ENCODE measurements at regions of chr4 and their contacts with region 1.

Region 1: GRCh38 chr4:54658252-54659093 is 716 bp downstream of the KIT start:
- DNase-seq: peak in 5 of 9 donors; percentile 11 to 45 (median 18)
- ATAC-seq: peak; percentile 43
- H3K4me3 ChIP-seq: peak overlapping the region; percentile 33
- H3K4me3 Mint-ChIP-seq: peak overlapping the region; percentile 64 to 88 (median 80)
- H3K27ac ChIP-seq: no peak overlapping the region
- H3K27ac Mint-ChIP-seq: no peak overlapping the region
- H3K4me1 ChIP-seq: peaks cover 0 to 10% of the 10 kb centered on the region in 2 donors
- H3K4me1 Mint-ChIP-seq: peaks cover 14 to 25% (median 22%) of the 10 kb centered on the region in 7 donors
- H3K27me3 ChIP-seq: peaks cover 0 to 12% of the 10 kb centered on the region in 2 donors
- H3K27me3 Mint-ChIP-seq: peaks cover 51 to 80% (median 59%) of the 10 kb centered on the region in 5 donors

Region 2: GRCh38 chr4:54315561-54316538 is 342.6 kb before region 1 on chr4:
- CTCF ChIA-PET with region 1: no interaction called
- POLR2A ChIA-PET with region 1: no interaction called
- intact Hi-C with region 1: no loop called
- DNase-seq: no peak
- ATAC-seq: peak; percentile 26
- H3K4me3 ChIP-seq: no peak overlapping the region
- H3K4me3 Mint-ChIP-seq: peak overlapping the region in 1 of 10 donors; percentile 61
- H3K27ac ChIP-seq: no peak overlapping the region
- H3K27ac Mint-ChIP-seq: peak overlapping the region in 1 of 9 donors; percentile 82
- H3K4me1 ChIP-seq: no peaks in the 10 kb centered on the region
- H3K4me1 Mint-ChIP-seq: peaks cover 0 to 35% (median 0%) of the 10 kb centered on the region in 7 donors
- H3K27me3 ChIP-seq: no peaks in the 10 kb centered on the region
- H3K27me3 Mint-ChIP-seq: peaks cover 0 to 26% (median 13%) of the 10 kb centered on the region in 5 donors

Region 3: DNA sequence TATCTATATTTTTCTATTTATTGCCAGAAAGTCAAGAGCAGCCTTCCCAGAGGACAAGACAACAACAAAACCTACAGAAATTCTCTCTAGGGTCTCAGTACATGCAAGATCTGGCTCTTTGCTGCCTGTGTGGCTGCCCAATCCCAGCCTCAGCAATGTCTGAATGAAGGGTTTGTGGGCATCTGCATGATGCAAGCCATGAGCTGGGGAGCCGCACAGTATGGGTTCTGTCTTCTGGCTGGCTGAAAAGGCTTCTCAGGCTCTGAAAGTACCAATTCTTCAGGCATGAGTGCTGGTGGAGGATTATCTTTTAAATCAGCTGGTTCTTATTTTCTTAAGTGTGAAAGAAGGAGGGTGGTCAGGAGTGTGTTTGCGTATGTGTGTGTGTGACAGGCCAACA is 324.8 kb before region 1 on chr4:
- CTCF ChIA-PET with region 1: no interaction called
- POLR2A ChIA-PET with region 1: no interaction called
- intact Hi-C with region 1: no loop called
- DNase-seq: no peak
- ATAC-seq: no peak
- H3K4me3 ChIP-seq: no peak overlapping the region
- H3K4me3 Mint-ChIP-seq: no peak overlapping the region
- H3K27ac ChIP-seq: no peak overlapping the region
- H3K27ac Mint-ChIP-seq: no peak overlapping the region
- H3K4me1 ChIP-seq: no peaks in the 10 kb centered on the region
- H3K4me1 Mint-ChIP-seq: no peaks in the 10 kb centered on the region
- H3K27me3 ChIP-seq: no peaks in the 10 kb centered on the region
- H3K27me3 Mint-ChIP-seq: peaks cover 4 to 25% (median 11%) of the 10 kb centered on the region in 5 donors

Region 4: DNA sequence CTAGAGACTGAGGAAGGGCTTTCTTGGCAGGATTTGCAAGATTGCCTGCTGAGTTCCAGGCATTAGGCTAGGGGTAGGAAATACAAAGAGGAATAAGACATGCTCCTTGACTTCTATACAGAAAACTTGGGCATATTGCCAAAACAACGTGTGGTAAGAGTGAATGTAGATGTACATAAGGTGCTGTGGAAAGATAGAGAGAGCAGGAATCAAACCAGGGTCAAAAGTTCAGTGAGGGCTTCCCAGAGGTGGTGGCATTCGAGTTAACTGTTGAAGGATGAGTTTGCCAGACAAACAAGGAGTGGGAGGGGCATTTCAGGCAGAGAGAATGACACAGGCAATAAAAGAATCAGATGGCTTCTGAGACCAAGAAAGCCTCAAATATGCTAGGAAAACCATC is 279.0 kb after region 1 on chr4:
- CTCF ChIA-PET with region 1: no interaction called
- POLR2A ChIA-PET with region 1: no interaction called
- intact Hi-C with region 1: no loop called
- DNase-seq: peak in 3 of 9 donors; percentile 6 to 18 (median 10)
- ATAC-seq: no peak
- H3K4me3 ChIP-seq: no peak overlapping the region
- H3K4me3 Mint-ChIP-seq: no peak overlapping the region
- H3K27ac ChIP-seq: no peak overlapping the region
- H3K27ac Mint-ChIP-seq: peak overlapping the region in 5 of 9 donors; percentile 32 to 72 (median 68)
- H3K4me1 ChIP-seq: peaks cover 0 to 14% of the 10 kb centered on the region in 2 donors
- H3K4me1 Mint-ChIP-seq: peaks cover 10 to 43% (median 28%) of the 10 kb centered on the region in 7 donors
- H3K27me3 ChIP-seq: no peaks in the 10 kb centered on the region
- H3K27me3 Mint-ChIP-seq: peaks cover 0 to 5% (median 0%) of the 10 kb centered on the region in 5 donors

Region 5: GRCh38 chr4:54961357-54961975 is 303.0 kb after region 1 on chr4:
- CTCF ChIA-PET with region 1: interaction called, 3 read pairs
- POLR2A ChIA-PET with region 1: interaction called, 3 read pairs
- intact Hi-C with region 1: loop called in 1 of 2 experiments (anchors 1 kb)
- DNase-seq: peak in 4 of 9 donors; percentile 29 to 48 (median 40)
- ATAC-seq: peak; percentile 46
- H3K4me3 ChIP-seq: no peak overlapping the region
- H3K4me3 Mint-ChIP-seq: no peak overlapping the region
- H3K27ac ChIP-seq: no peak overlapping the region
- H3K27ac Mint-ChIP-seq: peak overlapping the region in 2 of 9 donors; percentile 61 to 62
- H3K4me1 ChIP-seq: peaks cover 0 to 8% of the 10 kb centered on the region in 2 donors
- H3K4me1 Mint-ChIP-seq: peaks cover 5 to 37% (median 11%) of the 10 kb centered on the region in 7 donors
- H3K27me3 ChIP-seq: no peaks in the 10 kb centered on the region
- H3K27me3 Mint-ChIP-seq: peaks cover 0 to 3% (median 0%) of the 10 kb centered on the region in 5 donors